K562 (cell line): ENCODE measurements at regions of chr6 and their contacts with region 1.

Region 1: GRCh38 chr6:24985323-24985722 is 49.6 kb upstream of the RIPOR2 start:
- DNase-seq: no peak
- ATAC-seq: no peak
- H3K4me3 ChIP-seq: no peak overlapping the region
- H3K27ac ChIP-seq: no peak overlapping the region
- H3K4me1 ChIP-seq: no peaks in the 10 kb centered on the region
- H3K27me3 ChIP-seq: no peaks in the 10 kb centered on the region
- CTCF ChIP-seq: no peak
- EP300 ChIP-seq: no peak
- POLR2A ChIP-seq: no peak
- RAD21 ChIP-seq: no peak

Region 2: DNA sequence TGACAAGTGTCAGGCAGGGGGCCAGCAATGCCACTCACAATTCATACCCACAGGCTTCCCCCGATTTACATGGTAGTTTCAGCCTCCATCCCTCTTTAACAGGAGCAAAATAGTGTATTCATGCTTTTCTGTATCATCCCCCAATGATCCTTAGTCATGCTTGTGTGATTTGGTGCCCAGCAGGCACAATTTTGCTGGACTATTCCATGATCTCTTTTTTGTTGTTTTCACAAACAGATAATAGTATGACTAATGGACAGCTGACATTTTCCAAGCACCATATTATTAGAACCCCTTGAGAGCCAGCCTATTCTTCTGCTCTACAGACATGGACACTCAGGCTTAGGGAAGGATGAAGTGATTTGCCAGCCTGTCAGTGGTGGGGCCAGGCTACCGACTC is 78.7 kb after region 1 on chr6:
- CTCF ChIA-PET with region 1: no interaction called
- POLR2A ChIA-PET with region 1: no interaction called
- in situ Hi-C with region 1: no loop called
- intact Hi-C with region 1: loop called (anchors 2 kb)
- DNase-seq: no peak
- ATAC-seq: no peak
- H3K4me3 ChIP-seq: no peak overlapping the region
- H3K27ac ChIP-seq: no peak overlapping the region
- H3K4me1 ChIP-seq: no peaks in the 10 kb centered on the region
- H3K27me3 ChIP-seq: peaks cover 6 to 22% of the 10 kb centered on the region in 2 experiments; a peak in 4 of 5 replicates
- CTCF ChIP-seq: no peak
- EP300 ChIP-seq: no peak
- POLR2A ChIP-seq: no peak
- RAD21 ChIP-seq: no peak